Activated T-helper 2 cell treated with anti-CD3 and anti-CD28 coated beads, Interferon-gamma antibody, Interleukin-2, Interleukin-4, amounts not matched to agents 10 μg/mL and 5 μg/mL and 100 μg/mL, durations not matched to agents 14 hours and 24 hours and 36 hours (primary cell): ENCODE measurements at regions of chr2 and their contacts with region 1.

Region 1: DNA sequence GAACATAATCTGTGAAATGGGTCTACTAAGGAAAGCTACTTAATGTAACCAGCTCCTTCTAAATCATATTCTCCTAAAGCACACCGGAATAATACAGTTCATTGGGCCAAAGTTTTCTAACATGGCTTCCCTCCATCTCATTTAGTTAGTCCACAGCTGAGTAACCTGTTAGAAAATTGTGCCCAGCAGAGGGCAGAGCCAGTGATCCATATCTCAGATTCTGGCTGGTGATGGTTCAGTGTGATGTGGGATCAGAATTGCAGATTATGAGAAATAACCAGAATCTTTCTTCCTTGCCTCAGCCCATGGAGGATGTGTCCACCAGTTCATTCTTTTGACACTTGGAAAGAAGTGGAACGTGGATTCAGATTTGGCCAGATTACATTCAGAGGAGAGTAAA is 9.4 kb upstream of the CTLA4 start:
- DNase-seq: no peak
- H3K4me3 Mint-ChIP-seq: no peak overlapping the region
- H3K27ac Mint-ChIP-seq: peak overlapping the region; percentile 67
- H3K4me1 Mint-ChIP-seq: peaks cover 83% of the 10 kb centered on the region
- H3K27me3 Mint-ChIP-seq: no peaks in the 10 kb centered on the region

Region 2: GRCh38 chr2:203804070-203804469 is 54.1 kb before region 1 on chr2:
- intact Hi-C with region 1: loop called (anchors 2 kb)
- DNase-seq: peak; percentile 36
- H3K4me3 Mint-ChIP-seq: no peak overlapping the region
- H3K27ac Mint-ChIP-seq: peak overlapping the region; percentile 61
- H3K4me1 Mint-ChIP-seq: peaks cover 68% of the 10 kb centered on the region
- H3K27me3 Mint-ChIP-seq: no peaks in the 10 kb centered on the region

Region 3: GRCh38 chr2:203871371-203871983 is 13.3 kb after region 1 on chr2:
- intact Hi-C with region 1: loop called (anchors 1 kb)
- DNase-seq: peak; percentile 60
- H3K4me3 Mint-ChIP-seq: peak overlapping the region; percentile 96
- H3K27ac Mint-ChIP-seq: peak overlapping the region; percentile 95
- H3K4me1 Mint-ChIP-seq: peaks cover 57% of the 10 kb centered on the region
- H3K27me3 Mint-ChIP-seq: no peaks in the 10 kb centered on the region

Region 4: GRCh38 chr2:203887677-203888076 is 29.5 kb after region 1 on chr2:
- intact Hi-C with region 1: loop called (anchors 1 kb)
- DNase-seq: no peak
- H3K4me3 Mint-ChIP-seq: no peak overlapping the region
- H3K27ac Mint-ChIP-seq: peak overlapping the region; percentile 54
- H3K4me1 Mint-ChIP-seq: peaks cover 67% of the 10 kb centered on the region
- H3K27me3 Mint-ChIP-seq: no peaks in the 10 kb centered on the region

Region 5: DNA sequence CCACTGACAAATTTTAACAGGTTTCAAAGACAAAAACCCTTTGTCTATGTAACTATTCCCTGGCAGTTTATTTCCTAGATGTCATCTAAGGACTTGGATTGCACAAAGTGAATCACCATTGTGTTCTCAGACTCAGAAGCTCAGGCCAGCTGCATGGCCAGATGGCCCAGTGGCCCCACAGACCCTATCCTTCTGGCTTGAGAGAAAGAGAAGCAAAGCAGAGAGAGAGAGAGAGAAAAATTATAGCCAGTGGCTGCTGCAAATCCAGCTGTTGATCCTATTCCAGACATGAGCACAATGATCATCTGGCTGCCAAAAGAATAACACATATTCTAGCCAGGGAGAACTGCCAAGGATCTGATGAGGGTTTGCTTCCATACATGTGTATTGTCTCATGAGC is 35.2 kb after region 1 on chr2:
- intact Hi-C with region 1: loop called (anchors 1 kb)
- DNase-seq: no peak
- H3K4me3 Mint-ChIP-seq: no peak overlapping the region
- H3K27ac Mint-ChIP-seq: peak overlapping the region; percentile 92
- H3K4me1 Mint-ChIP-seq: peaks cover 79% of the 10 kb centered on the region
- H3K27me3 Mint-ChIP-seq: no peaks in the 10 kb centered on the region